ENCODE measurements at regions of chr10 and their contacts with region 1.

Region 1: GRCh38 chr10:102917962-102918816 is at the start of gene CNNM2:
- DNase-seq: peak; percentile 98
- ATAC-seq: peak; percentile 89
- H3K4me3 ChIP-seq: peak within 1 kb of the TSS; percentile 85
- H3K27ac ChIP-seq: no peak within 1 kb of the TSS
- H3K4me1 ChIP-seq: peaks cover 22% of the 10 kb centered on the region
- H3K27me3 ChIP-seq: no peaks in the 10 kb centered on the region
- CTCF ChIP-seq: no peak
- total RNA-seq, gene CNNM2: 7.2 and 9.7 TPM in 2 replicates

Region 2: GRCh38 chr10:103053659-103054581 is 135.7 kb after region 1 on chr10:
- CTCF ChIA-PET with region 1: no interaction called
- POLR2A ChIA-PET with region 1: no interaction called
- intact Hi-C with region 1: loop called (anchors 1 kb)
- DNase-seq: peak; percentile 41
- ATAC-seq: peak; percentile 96
- H3K4me3 ChIP-seq: 0 out of 2 replicates have a peak overlapping the region, but pooled peaks have one; percentile 47
- H3K27ac ChIP-seq: no peak overlapping the region
- H3K4me1 ChIP-seq: no peaks in the 10 kb centered on the region
- H3K27me3 ChIP-seq: no peaks in the 10 kb centered on the region
- CTCF ChIP-seq: peak; percentile 48

Region 3: GRCh38 chr10:103069453-103070331 is 151.5 kb after region 1 on chr10:
- CTCF ChIA-PET with region 1: no interaction called
- POLR2A ChIA-PET with region 1: interaction called, 3 read pairs
- intact Hi-C with region 1: loop called (anchors 1 kb)
- DNase-seq: peak; percentile 74
- ATAC-seq: peak; percentile 88
- H3K4me3 ChIP-seq: no peak overlapping the region
- H3K27ac ChIP-seq: no peak overlapping the region
- H3K4me1 ChIP-seq: no peaks in the 10 kb centered on the region
- H3K27me3 ChIP-seq: no peaks in the 10 kb centered on the region
- CTCF ChIP-seq: peak; percentile 80

Measured in PC-3 (cell line).